ENCODE measurements at regions of chr2 and their contacts with region 1.

Region 1: GRCh38 chr2:64228126-64228678 is 84.0 kb upstream of the PELI1 start:
- DNase-seq: peak; percentile 65 to 93 (median 91)
- H3K4me3 ChIP-seq: peak overlapping the region; percentile 35 to 76 (median 62)
- H3K27ac ChIP-seq: peak overlapping the region; percentile 74 to 98 (median 94)
- H3K27me3 ChIP-seq: no peaks in the 10 kb centered on the region
- CTCF ChIP-seq: peak in 33 of 56 donors; percentile 11 to 59 (median 24)

Region 2: DNA sequence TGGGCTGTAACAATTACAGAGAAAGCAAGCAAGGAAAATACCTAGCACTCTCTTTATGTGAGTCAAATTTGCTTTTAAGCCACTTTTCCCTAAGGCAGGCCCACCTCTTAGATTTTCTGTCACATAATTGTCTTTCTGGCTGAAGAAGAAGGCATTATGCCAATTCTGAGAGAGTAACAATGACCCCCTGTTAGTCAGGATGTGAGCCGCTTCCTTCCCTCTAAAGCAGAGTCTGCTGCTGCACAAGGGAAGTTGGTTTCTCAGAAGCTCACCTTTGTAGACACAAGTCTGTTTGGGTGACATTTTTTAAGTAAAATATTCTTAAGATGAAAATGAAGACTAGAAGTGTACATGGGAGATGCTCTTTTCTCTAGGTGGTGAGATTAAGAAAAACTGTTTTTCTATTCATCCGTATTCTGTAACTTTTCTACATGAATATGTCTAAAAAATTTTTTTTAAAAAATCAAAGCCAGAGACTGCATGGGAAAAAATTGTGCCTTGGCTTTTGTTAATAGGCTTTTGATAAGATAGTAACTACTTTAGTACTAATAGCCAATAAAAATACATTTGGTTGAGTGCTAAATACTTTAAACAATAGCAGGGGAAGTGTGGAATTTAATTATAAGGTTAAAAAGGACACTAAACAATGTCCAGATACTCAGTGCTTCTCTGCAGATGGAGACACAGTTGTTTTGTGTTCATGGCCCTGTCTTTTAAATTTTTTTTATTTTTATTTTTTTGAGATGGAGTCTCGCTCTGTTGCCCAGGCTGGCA is 175.5 kb before region 1 on chr2:
- intact Hi-C with region 1: loop called (anchors 10 kb)
- DNase-seq: no peak
- H3K4me3 ChIP-seq: no peak overlapping the region
- H3K27ac ChIP-seq: peak overlapping the region in 8 of 59 donors; percentile 5 to 47 (median 19)
- H3K27me3 ChIP-seq: no peaks in the 10 kb centered on the region
- CTCF ChIP-seq: no peak

Region 3: GRCh38 chr2:64730551-64731262 is 502.5 kb after region 1 on chr2:
- intact Hi-C with region 1: no loop called
- DNase-seq: peak in 8 of 10 donors; percentile 47 to 79 (median 64)
- H3K4me3 ChIP-seq: peak overlapping the region; percentile 22 to 70 (median 50)
- H3K27ac ChIP-seq: peak overlapping the region; percentile 21 to 91 (median 82)
- H3K27me3 ChIP-seq: no peaks in the 10 kb centered on the region
- CTCF ChIP-seq: peak in 5 of 56 donors; percentile 6 to 33 (median 12)